ENCODE measurements at regions of chr3 and their contacts with region 1.

Region 1: GRCh38 chr3:86782286-86782685 is 208.7 kb downstream of the VGLL3 start:
- DNase-seq: no peak
- ATAC-seq: no peak

Region 2: DNA sequence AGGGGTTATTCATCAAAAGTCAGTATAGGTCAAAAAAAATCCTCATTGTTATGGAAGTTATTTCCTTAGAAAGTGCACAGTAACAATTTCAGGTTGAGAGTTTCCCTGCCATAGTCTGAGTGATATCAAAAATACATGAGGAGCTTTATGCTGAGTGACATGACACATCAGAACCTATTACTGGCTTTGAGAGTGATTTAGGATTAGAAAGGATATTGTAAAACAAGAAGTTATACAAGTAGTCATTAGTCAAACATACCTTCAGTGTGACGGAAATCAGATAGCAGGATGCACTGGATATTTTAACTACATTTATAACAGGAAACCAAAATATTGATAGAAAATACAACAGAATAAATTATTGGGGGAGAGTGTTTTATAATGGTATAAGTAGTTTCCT is 262.5 kb before region 1 on chr3:
- intact Hi-C with region 1: no loop called
- DNase-seq: no peak
- ATAC-seq: no peak

Region 3: DNA sequence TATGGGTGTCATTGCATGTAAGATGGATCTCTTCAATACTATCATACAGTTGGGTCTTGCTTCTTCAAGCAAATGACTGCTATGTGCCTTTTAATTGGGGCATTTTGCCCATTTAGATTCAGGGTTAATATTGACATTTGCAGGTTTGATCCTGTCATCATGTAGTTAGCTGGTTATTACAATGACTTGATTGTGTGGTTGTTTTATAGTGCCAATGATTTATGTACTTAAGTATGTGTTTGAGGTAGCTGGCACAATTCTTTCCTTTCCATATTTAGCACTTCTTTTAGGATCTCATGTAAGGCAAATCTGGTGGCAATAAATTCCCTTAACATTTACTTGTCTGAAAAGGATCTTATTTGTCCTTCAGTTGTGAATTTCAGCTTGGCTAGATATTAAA is 58.9 kb before region 1 on chr3:
- intact Hi-C with region 1: no loop called
- DNase-seq: no peak
- ATAC-seq: no peak

Region 4: GRCh38 chr3:87082796-87083440 is 300.6 kb after region 1 on chr3:
- intact Hi-C with region 1: loop called (anchors 5 kb)
- DNase-seq: no peak
- ATAC-seq: peak; percentile 66

Measured in Right ventricle myocardium superior (tissue), 1 donor.